ENCODE measurements at regions of chr13 and their contacts with region 1.

Region 1: DNA sequence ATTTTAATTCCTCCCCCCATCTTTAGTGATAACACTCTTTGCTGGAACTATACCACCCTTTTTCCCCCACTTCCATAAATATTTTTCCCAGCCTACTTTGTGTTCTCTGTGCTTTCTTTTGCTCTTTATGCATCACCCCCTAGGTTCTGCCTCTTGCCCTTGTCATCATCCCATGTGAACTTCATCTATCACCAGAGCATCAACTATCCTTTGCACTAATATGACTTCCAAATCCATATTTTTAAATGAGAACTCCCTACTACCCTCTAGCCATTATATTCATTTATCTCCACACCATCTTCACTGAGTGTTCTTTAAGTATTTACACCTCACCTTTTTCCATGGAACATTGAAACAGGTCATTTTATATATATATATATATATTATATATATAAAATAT is 452.7 kb downstream of the FOXO1 start:
- DNase-seq: no peak
- ATAC-seq: no peak
- H3K4me3 ChIP-seq: no peak overlapping the region
- H3K4me3 Mint-ChIP-seq: peak overlapping the region in 1 of 10 donors; percentile 11
- H3K27ac ChIP-seq: no peak overlapping the region
- H3K27ac Mint-ChIP-seq: peak overlapping the region in 5 of 9 donors; percentile 9 to 78 (median 27)
- H3K4me1 ChIP-seq: peaks cover 4 to 19% of the 10 kb centered on the region in 2 donors
- H3K4me1 Mint-ChIP-seq: peaks cover 26 to 80% (median 70%) of the 10 kb centered on the region in 7 donors
- H3K27me3 ChIP-seq: no peaks in the 10 kb centered on the region
- H3K27me3 Mint-ChIP-seq: no peaks in the 10 kb centered on the region

Region 2: DNA sequence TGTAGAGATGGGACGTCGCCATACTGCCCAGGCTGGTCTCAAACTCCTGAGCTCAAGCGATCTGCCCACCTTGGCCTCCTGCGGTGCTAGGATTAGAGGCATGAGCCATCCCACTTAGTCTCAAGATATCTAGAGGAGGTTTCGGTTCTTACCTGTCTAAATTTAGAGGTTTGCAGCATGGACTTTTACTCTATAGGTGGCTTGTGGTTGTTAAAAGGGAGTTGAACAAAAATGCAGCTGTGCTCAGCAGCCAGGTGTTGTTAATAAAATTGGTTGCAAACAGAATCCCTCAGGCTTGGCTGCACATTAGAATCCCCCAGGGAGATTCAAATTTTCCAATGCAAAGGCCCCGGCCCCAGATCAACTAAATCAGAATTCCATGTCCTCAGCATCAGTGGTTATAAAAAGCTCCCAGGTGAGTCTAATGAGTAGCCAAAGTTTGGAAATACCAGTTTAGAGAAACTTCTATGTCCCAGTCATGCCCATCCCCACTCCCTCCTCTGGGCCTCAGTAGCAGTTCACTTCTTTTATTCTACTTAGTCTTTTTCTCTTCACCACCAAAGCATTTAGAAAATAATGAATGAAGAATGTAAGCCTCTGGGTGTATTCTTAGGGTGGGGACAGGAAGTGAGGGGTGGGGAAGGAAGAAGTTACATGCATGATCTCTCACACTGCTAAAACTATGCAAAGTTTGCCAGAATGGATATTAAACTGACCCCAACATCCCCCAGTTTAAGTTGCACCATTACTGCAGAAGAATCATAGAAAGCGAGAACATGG is 87.3 kb before region 1 on chr13:
- CTCF ChIA-PET with region 1: no interaction called
- POLR2A ChIA-PET with region 1: no interaction called
- intact Hi-C with region 1: loop called in 1 of 2 experiments (anchors 2 kb)
- DNase-seq: peak in 1 of 9 donors; percentile 16
- ATAC-seq: no peak
- H3K4me3 ChIP-seq: no peak overlapping the region
- H3K4me3 Mint-ChIP-seq: peak overlapping the region in 8 of 10 donors; percentile 5 to 78 (median 45)
- H3K27ac ChIP-seq: no peak overlapping the region
- H3K27ac Mint-ChIP-seq: peak overlapping the region in 4 of 9 donors; percentile 6 to 76 (median 30)
- H3K4me1 ChIP-seq: peaks cover 6 to 16% of the 10 kb centered on the region in 2 donors
- H3K4me1 Mint-ChIP-seq: peaks cover 24 to 60% (median 29%) of the 10 kb centered on the region in 7 donors
- H3K27me3 ChIP-seq: no peaks in the 10 kb centered on the region
- H3K27me3 Mint-ChIP-seq: no peaks in the 10 kb centered on the region